Lower lobe of right lung (tissue), 2 donors: ENCODE measurements at regions of chr5 and their contacts with region 1.

Region 1: GRCh38 chr5:178279725-178280438 is 47.3 kb upstream of the PHYKPL start:
- DNase-seq: peak; percentile 93
- ATAC-seq: peak; percentile 93
- H3K4me3 ChIP-seq: no peak overlapping the region
- H3K27ac ChIP-seq: no peak overlapping the region
- H3K4me1 ChIP-seq: peaks cover 10% of the 10 kb centered on the region
- H3K27me3 ChIP-seq: peaks cover 4% of the 10 kb centered on the region
- CTCF ChIP-seq: peak; percentile 96

Region 2: GRCh38 chr5:178186427-178186826 is 93.5 kb before region 1 on chr5:
- intact Hi-C with region 1: no loop called
- DNase-seq: no peak
- ATAC-seq: no peak
- H3K4me3 ChIP-seq: no peak overlapping the region
- H3K27ac ChIP-seq: no peak overlapping the region
- H3K4me1 ChIP-seq: no peaks in the 10 kb centered on the region
- H3K27me3 ChIP-seq: no peaks in the 10 kb centered on the region
- CTCF ChIP-seq: no peak

Region 3: GRCh38 chr5:178551059-178551458 is 271.2 kb after region 1 on chr5:
- intact Hi-C with region 1: loop called (anchors 10 kb)
- DNase-seq: no peak
- ATAC-seq: no peak
- H3K4me3 ChIP-seq: no peak overlapping the region
- H3K27ac ChIP-seq: no peak overlapping the region
- H3K4me1 ChIP-seq: no peaks in the 10 kb centered on the region
- H3K27me3 ChIP-seq: no peaks in the 10 kb centered on the region
- CTCF ChIP-seq: peak; percentile 53